Psoas muscle (tissue), 8 donors: ENCODE measurements at regions of chr14 and their contacts with region 1.

Region 1: DNA sequence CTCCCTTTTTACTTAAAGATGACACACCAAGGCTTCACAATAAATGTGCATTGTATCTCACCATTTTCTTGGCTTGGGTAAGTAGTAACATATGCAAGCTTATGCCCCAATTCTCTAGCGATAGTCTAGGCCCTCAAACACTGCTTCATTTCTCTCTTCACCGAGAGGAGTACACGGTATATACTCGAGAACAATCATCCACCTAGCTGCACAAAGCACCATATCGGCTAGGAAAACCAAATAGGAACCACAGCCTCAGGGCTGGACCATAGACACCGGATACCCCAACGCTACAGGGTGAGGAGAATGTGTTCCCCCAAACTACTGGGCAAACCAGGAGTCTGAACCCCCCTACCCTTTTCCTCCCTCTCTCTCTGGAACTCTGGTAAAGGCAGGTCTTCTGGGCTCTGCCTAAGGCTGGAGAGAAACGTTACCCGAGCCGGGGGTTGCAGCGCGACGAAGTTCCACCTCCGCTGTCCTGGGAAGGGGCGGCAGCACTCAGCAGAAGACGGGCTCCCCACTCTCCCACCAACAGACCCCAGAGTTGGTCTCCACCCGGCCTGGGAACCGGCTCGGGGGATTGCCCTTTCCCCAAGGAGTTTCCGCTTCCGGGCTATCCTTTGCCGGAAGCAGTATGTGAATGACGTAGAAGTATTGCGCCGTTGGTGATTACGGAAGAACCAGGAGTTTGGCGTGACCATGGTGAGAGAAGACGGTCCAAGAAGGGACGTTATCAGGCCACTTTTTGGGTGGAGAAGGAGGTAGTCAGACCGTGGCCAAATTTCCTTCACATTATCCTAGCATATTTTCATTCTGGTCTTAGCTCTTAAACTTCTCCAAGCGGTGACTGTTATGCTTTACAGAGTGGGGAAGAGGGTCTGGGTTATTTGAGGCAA is at the starts of genes AREL1 and FCF1:
- DNase-seq: peak; percentile 78 to 86
- ATAC-seq: peak; percentile 98 to 100 (median 99)
- H3K4me3 ChIP-seq: peak within 1 kb of the TSS; percentile 79
- H3K27ac ChIP-seq: peak within 1 kb of the TSS; percentile 73
- H3K4me1 ChIP-seq: peaks cover 40% of the 10 kb centered on the region
- H3K27me3 ChIP-seq: no peaks in the 10 kb centered on the region
- CTCF ChIP-seq: no peak
- total RNA-seq, gene AREL1: 15.0 to 24.6 (median 18.7) TPM
- total RNA-seq, gene FCF1: 22.9 to 33.5 (median 29.1) TPM

Region 2: DNA sequence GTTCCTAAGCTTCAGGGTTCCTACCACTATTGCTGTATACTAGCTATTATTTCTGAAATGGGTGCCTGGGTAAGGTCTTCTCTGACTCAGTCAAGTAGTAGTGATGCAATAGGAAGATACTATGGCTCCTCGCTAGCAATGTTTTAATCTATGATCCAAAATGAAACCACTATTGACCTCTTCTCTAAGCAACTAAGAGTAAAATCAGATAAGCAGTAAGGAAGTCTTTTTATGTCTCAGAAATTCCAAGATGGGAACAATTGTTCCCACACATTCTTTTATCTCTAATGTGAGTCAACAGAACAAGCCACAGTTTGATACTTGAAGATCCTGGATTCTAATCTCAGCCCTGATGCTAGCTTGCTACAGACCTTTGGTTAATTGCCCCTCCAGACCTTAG is 45.0 kb before region 1 on chr14:
- intact Hi-C with region 1: loop called in 1 of 2 experiments (anchors 5 kb)
- DNase-seq: no peak
- ATAC-seq: no peak
- H3K4me3 ChIP-seq: no peak overlapping the region
- H3K27ac ChIP-seq: no peak overlapping the region
- H3K4me1 ChIP-seq: peaks cover 29% of the 10 kb centered on the region
- H3K27me3 ChIP-seq: no peaks in the 10 kb centered on the region
- CTCF ChIP-seq: no peak

Region 3: DNA sequence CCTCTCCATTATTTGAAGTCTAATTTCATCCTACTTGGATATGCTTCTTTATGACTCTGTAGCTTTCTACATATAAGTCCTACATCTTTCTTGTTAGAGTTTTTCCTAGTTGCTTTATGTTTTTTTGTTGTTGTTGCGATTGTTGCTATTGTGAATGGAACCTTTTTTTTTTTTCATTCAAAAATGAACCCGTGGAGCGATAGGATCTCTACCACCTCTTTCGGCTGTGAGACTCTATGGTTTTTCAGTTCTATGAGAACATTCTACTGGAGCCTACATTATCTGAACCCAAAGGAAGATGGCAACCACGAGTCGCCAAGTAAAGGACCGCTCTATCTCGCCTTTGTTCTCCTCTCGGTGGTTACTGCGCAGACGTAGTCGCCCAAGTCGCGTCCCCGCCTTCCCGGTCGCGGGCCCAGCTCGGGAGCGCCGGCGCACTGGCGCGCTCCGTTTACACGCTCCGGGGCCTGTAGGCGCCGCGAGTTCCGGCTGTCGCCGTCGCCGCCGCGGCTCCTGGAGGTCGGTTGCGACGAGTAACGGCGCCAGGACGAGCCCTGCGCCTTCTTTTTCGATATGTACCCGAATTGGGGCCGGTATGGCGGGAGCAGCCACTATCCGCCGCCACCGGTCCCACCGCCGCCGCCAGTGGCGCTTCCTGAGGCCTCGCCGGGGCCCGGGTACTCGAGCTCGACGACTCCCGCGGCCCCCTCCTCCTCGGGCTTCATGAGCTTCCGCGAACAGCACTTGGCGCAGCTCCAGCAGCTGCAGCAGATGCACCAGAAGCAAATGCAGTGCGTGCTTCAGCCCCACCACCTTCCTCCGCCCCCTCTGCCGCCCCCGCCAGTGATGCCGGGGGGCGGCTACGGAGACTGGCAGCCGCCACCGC is 50.4 kb after region 1 on chr14 and contains the start of gene YLPM1:
- intact Hi-C with region 1: loop called in 1 of 2 experiments (anchors 5 kb)
- DNase-seq: peak; percentile 90 to 96
- ATAC-seq: peak; percentile 99
- H3K4me3 ChIP-seq: peak within 1 kb of the TSS; percentile 99
- H3K27ac ChIP-seq: peak within 1 kb of the TSS; percentile 98
- H3K4me1 ChIP-seq: peaks cover 27% of the 10 kb centered on the region
- H3K27me3 ChIP-seq: no peaks in the 10 kb centered on the region
- CTCF ChIP-seq: peak; percentile 43
- total RNA-seq, gene YLPM1: 30.1 to 40.6 (median 35.7) TPM